GM10248 (cell line): ENCODE measurements at regions of chr7 and their contacts with region 1.

Region 1: GRCh38 chr7:36366718-36367560 is 22.7 kb upstream of the ANLN start:
- DNase-seq: peak; percentile 95
- CTCF ChIP-seq: peak; percentile 91

Region 2: GRCh38 chr7:35624299-35625186 is 742.4 kb before region 1 on chr7:
- CTCF ChIA-PET with region 1: no interaction called
- POLR2A ChIA-PET with region 1: no interaction called
- DNase-seq: peak; percentile 70
- CTCF ChIP-seq: peak; percentile 80

Region 3: DNA sequence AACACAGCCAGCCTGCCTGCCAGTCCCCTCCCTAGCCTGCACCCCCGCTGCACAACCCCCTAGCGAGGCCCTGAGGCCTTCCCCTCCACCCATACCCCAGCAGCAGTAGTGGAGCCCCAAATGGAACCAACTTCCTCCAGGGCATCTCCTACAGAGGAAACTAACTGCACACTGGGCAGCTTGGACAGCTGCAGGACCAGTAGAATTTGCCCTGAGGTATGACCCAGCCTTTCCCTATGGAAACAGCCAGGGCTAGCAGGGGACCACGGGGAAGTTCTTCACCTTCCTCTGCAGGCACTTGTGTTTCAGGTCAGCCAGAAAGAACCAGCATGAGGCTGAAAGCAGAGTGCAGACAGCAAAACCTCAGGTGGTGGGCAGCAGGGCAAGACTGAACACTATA is 219.6 kb before region 1 on chr7:
- CTCF ChIA-PET with region 1: no interaction called
- POLR2A ChIA-PET with region 1: no interaction called
- DNase-seq: no peak
- CTCF ChIP-seq: no peak

Region 4: DNA sequence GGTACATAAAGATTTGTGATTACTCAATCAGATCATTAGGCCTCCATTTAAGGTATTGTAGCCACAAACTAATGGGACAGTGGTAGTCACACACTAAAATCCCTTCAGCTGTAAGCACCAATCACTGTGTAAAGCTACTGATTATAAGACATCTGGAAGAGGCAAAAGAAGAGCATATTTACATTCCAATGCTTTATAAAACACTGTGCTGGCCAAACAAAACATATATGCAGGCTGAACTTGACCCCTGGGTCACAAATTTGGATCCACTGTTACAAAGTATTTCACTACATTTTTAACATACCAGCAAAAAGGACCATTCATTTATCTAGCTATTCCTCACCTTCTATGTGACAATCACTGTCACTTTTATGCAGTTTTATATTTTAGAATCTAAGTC is 18.7 kb before region 1 on chr7:
- CTCF ChIA-PET with region 1: interaction called, 14 read pairs
- POLR2A ChIA-PET with region 1: no interaction called
- DNase-seq: no peak
- CTCF ChIP-seq: no peak

Region 5: GRCh38 chr7:36379831-36380504 is 13.0 kb after region 1 on chr7:
- CTCF ChIA-PET with region 1: interaction called, 21 read pairs
- POLR2A ChIA-PET with region 1: no interaction called
- DNase-seq: no peak
- CTCF ChIP-seq: no peak

Region 6: DNA sequence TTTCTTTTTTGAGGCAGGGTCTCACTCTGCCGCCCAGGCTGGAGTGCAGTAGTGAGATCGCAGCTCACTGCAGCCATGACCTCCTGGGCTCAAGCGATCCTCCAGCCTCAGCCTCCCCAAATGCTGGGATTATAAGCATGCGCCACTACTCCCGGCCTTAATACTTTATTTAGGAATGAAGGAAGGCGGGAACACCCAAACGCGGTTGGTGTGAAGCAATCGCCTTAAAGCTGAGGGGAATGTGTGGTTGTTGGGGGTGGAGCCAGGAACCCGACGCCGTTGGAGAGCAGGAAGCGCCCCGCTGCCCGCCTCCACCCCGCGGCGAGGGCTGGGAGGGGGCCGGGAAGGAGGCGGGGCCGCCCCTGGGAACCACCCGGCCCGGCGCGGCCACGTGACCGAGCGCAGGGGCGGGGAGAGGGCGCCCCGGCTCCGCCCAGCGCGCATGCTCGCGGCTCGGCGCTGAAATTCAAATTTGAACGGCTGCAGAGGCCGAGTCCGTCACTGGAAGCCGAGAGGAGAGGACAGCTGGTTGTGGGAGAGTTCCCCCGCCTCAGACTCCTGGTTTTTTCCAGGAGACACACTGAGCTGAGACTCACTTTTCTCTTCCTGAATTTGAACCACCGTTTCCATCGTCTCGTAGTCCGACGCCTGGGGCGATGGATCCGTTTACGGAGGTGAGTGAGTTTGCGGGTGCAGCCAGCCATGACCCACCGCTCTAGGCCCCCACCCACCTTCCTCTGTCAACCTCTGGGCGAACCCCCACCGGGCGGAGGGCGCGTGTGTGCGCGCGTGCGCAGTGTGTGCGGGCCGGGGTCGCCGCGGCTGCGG is 22.6 kb after region 1 on chr7 and contains the start of gene ANLN:
- CTCF ChIA-PET with region 1: interaction called, 10 read pairs
- POLR2A ChIA-PET with region 1: no interaction called
- DNase-seq: peak; percentile 98
- CTCF ChIP-seq: no peak

Region 7: GRCh38 chr7:37052705-37053104 is 685.8 kb after region 1 on chr7:
- CTCF ChIA-PET with region 1: no interaction called
- POLR2A ChIA-PET with region 1: no interaction called
- DNase-seq: no peak
- CTCF ChIP-seq: no peak